ENCODE measurements at regions of chr17 and their contacts with region 1.

Region 1: GRCh38 chr17:42112552-42113176 is at the start of gene DHX58:
- ATAC-seq: peak in 7 of 8 experiments; percentile 10 to 96 (median 31)
- H3K4me3 ChIP-seq: no peak within 1 kb of the TSS
- H3K27ac ChIP-seq: no peak within 1 kb of the TSS
- H3K4me1 ChIP-seq: no peaks in the 10 kb centered on the region
- total RNA-seq, gene DHX58: 0.33 to 29.3 (median 3.3) TPM

Region 2: GRCh38 chr17:41521574-41522261 is 590.9 kb before region 1 on chr17:
- in situ Hi-C with region 1: no loop called
- ATAC-seq: peak in 2 of 8 experiments; percentile 82 to 86
- H3K4me3 ChIP-seq: no peak overlapping the region
- H3K27ac ChIP-seq: no peak overlapping the region
- H3K4me1 ChIP-seq: no peaks in the 10 kb centered on the region

Region 3: GRCh38 chr17:42019509-42020404 is 92.9 kb before region 1 on chr17 and contains the start of gene NKIRAS2:
- in situ Hi-C with region 1: loop called in 3 of 9 experiments (anchors 10 kb)
- ATAC-seq: peak; percentile 26 to 70 (median 34)
- H3K4me3 ChIP-seq: peak within 1 kb of the TSS; percentile 58 to 99 (median 88)
- H3K27ac ChIP-seq: peak within 1 kb of the TSS; percentile 81 to 91
- H3K4me1 ChIP-seq: peaks cover 11 to 24% of the 10 kb centered on the region in 2 donors
- total RNA-seq, gene NKIRAS2: 32.3 to 65.8 (median 51.8) TPM

Region 4: DNA sequence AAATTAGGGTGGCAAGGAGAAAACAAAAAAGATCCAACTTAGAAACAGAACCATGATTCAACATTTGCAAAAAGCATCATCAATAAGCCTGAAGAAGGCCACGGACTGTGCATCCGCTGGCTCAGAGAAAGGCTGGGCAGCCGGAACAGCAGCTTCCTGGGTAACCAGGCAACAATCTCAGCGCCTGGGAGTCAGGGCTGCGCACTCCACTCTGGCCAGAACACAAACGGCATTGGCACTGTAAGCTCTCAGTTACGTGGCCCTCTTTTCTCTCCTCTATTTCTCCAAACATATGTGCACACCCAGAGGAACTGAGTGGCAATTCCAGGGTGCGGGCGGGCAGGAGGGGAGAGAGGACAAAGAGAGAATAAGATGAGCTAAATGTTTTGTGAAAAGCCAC is 88.0 kb after region 1 on chr17:
- in situ Hi-C with region 1: no loop called
- ATAC-seq: peak in 6 of 8 experiments; percentile 65 to 92 (median 90)
- H3K4me3 ChIP-seq: no peak overlapping the region
- H3K27ac ChIP-seq: peak overlapping the region; percentile 69 to 70
- H3K4me1 ChIP-seq: peaks cover 34 to 36% of the 10 kb centered on the region in 2 donors

Measured in motor neuron (in vitro differentiated cells).